Activated T-helper 1 cell treated with anti-CD3 and anti-CD28 coated beads, Interleukin-12 subunit alpha, Interleukin-12 subunit beta, Interleukin-2, Interleukin-4 antibody, amounts not matched to agents 30 ng/mL and 10 ng/mL and 1 ng/mL, durations not matched to agents 14 hours and 24 hours and 36 hours (primary cell): ENCODE measurements at regions of chr19 and their contacts with region 1.

Region 1: DNA sequence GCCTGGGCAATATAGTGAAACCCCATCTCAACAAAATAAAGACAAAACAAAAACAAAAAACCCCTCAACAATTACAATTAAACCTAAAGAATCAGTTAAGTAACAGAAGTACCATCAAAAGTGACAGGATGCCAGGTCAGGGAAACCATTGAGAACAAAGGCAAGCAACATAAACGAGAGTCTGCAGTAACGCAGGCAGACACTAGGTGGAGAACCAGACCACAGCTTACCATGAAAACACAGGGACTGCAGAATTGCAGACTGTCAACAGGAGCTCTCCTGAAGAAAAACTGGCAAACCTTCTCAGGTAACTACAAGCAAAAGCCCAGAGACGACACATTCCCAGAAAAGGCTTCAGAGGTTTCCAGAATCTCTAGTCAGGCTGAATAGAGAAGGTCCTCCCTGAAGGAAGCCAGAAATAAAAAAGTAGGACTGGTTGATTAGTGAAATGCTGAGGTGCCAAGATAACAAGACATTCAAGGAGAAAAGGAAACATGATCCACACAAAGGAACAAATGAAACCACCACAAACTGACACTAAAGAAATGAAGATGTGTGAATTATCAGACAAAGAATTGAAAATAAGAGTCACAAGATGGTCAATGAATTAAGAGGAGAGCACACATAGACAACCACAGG is 2.2 kb upstream of the ZNF665 start:
- DNase-seq: peak; percentile 65
- H3K4me3 Mint-ChIP-seq: peak overlapping the region; percentile 46
- H3K27ac Mint-ChIP-seq: no peak overlapping the region
- H3K4me1 Mint-ChIP-seq: peaks cover 32% of the 10 kb centered on the region
- H3K27me3 Mint-ChIP-seq: no peaks in the 10 kb centered on the region

Region 2: DNA sequence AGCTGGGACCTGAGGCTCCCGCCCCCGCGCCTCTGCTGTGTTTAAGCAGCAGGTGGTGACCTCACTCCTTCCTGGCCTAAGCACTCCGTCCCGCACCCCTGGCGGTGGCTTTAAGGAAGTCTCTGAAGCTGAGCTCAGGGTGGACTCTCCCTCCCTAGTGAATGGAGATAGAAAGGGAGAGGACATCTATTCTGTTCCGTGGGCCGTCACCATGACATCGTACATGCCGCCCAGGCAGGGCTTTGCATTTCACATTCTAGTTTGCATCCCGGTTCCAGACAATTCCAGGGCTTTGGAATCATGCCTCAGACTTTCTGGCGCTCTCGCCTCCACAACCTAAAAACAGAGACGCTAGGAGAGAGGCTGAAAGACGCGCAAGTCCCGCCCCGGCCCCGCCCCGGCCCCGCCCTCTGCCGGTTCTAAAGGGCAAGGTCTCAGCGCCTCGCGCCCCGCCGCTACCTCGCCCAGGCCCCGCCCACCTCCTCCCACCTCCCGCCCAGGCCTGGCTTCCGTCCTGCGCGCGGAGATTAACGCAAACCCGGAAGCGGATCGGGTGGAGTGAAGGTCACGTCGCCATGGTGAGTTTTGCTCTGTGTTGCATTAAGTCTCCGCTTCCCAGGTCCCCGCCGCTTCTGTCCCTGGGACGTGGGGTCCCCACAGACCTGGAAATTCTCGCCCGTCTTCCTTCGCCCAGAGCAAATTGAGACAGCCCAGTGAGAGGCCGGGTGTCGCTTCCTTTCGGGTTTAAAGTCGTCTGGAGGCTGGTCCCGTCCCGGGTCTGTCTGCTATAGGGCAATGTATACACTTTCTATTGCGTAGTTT is 668.0 kb before region 1 on chr19 and contains the start of gene ZNF808:
- intact Hi-C with region 1: loop called (anchors 5 kb)
- DNase-seq: peak; percentile 87
- H3K4me3 Mint-ChIP-seq: peak within 1 kb of the TSS; percentile 99
- H3K27ac Mint-ChIP-seq: peak within 1 kb of the TSS; percentile 98
- H3K4me1 Mint-ChIP-seq: peaks cover 12% of the 10 kb centered on the region
- H3K27me3 Mint-ChIP-seq: no peaks in the 10 kb centered on the region
- total RNA-seq, gene ZNF808: 19.1 and 20.0 TPM in 2 replicates

Region 3: DNA sequence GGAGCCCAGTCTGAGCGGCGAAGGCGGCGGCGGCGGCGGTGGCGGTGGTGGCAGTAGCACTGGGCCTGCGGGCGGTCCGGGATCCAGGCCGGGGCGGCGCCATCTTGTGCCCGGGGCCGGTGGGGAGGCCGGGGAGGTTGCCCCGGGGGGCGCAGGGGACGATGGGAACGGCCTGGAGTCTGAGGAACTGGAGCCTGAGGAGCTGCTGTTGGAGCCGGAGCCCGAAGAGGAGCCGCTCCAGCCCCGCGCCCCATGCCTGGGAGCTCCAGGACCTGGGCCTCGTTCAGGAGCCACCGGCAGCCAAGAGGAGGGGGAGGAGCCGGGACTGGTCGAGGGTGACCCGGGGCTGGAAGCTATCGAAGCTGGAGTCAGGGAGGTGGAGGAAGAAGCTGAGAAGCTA is 385.6 kb before region 1 on chr19:
- intact Hi-C with region 1: no loop called
- DNase-seq: no peak
- H3K4me3 Mint-ChIP-seq: no peak overlapping the region
- H3K27ac Mint-ChIP-seq: no peak overlapping the region
- H3K4me1 Mint-ChIP-seq: no peaks in the 10 kb centered on the region
- H3K27me3 Mint-ChIP-seq: no peaks in the 10 kb centered on the region

Region 4: DNA sequence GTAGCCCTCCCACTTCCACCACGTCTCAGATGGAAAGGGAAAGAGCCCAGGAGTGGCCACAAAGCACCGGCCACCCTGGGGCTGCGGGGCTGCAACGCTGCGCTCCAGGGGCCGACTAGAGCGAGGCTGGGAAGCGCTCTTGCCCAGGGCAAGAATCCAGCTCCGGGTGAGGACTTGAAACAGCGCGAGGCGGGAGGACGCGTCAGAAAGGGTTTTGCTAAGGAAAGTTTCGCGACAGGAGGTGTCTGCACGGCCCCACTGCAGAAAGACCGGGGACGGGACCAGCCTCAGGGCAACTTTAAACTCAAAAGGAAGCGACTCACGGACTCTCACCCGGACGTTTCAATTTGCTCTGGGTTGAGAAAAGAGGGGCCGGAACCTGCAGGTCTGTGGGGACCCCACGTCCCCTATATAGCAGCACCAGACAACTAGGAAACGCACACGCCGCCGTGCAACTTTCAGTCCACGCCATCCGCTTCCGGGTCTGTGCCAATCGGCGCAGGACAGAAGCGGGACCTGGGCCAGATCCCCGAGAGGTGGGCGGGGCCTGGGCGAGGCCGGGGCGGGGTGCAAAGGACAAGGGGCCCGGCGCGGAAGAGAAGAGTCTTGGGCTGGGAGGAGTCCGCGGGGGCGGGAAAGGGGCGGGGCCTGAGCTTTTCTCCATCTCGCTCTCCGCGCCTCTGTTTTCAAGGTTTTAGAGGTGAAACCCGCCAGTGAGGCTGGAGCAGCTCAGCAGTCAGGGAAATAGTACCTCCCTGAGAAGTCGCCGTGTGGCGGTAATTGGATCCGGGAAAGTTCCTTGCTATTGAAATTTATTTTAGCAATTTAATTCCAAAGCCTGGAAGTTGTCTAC is 232.8 kb before region 1 on chr19 and contains the start of gene ZNF816:
- intact Hi-C with region 1: loop called (anchors 1 kb)
- DNase-seq: peak; percentile 99
- H3K4me3 Mint-ChIP-seq: peak within 1 kb of the TSS; percentile 98
- H3K27ac Mint-ChIP-seq: peak within 1 kb of the TSS; percentile 93
- H3K4me1 Mint-ChIP-seq: peaks cover 25% of the 10 kb centered on the region
- H3K27me3 Mint-ChIP-seq: no peaks in the 10 kb centered on the region
- total RNA-seq, gene ZNF816: 7.0 and 9.4 TPM in 2 replicates

Region 5: DNA sequence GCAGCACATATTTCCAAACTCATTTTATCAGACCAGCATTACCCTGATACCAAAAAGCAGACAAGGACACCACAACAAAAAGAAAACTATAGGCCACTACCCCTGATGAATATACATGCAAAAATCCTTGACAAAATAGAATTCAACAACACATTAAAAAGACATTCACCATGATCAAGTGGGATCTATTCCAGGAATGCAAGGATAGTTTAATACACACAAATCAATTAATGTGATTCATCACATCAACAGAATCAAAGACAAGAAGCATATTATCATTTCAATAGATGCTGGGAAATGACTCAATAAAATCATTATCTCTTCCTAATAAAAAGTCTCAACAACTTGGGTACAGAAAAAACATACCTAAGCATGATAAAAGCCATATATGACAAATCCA is 47.7 kb before region 1 on chr19:
- intact Hi-C with region 1: no loop called
- DNase-seq: no peak
- H3K4me3 Mint-ChIP-seq: no peak overlapping the region
- H3K27ac Mint-ChIP-seq: no peak overlapping the region
- H3K4me1 Mint-ChIP-seq: no peaks in the 10 kb centered on the region
- H3K27me3 Mint-ChIP-seq: no peaks in the 10 kb centered on the region

Region 6: DNA sequence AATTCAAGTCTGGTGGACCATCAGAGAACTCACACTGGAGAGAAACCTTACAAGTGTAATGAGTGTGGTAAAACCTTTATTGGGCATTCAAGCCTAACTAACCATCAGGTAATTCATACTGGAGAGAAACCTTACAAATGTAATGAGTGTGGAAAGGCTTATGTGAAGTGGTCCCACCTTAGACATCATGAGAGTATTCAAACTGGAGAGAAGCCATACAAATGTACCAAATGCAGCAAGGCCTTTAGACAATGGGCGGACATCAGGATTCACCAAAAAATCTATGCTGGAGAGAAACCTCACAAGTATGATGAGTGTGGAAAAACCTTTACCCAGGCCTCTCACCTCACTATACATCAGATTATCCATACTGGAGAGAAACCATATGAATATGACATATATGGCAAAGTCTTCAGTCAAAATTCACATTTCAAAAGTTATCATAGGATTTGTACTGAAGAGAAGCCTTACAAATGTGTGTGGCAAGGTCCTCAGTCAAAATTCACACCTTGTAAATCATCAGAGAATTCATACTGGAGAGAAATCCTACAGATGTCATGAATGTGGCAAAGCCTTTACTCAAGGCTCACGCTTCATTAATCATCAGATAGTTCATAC is 17.4 kb after region 1 on chr19:
- intact Hi-C with region 1: no loop called
- DNase-seq: no peak
- H3K4me3 Mint-ChIP-seq: no peak overlapping the region
- H3K27ac Mint-ChIP-seq: no peak overlapping the region
- H3K4me1 Mint-ChIP-seq: no peaks in the 10 kb centered on the region
- H3K27me3 Mint-ChIP-seq: no peaks in the 10 kb centered on the region

Region 7: GRCh38 chr19:53365134-53365898 is 169.9 kb after region 1 on chr19 and contains the start of gene ZNF525:
- intact Hi-C with region 1: loop called (anchors 1 kb)
- DNase-seq: peak; percentile 93
- H3K4me3 Mint-ChIP-seq: peak within 1 kb of the TSS; percentile 93
- H3K27ac Mint-ChIP-seq: peak within 1 kb of the TSS; percentile 91
- H3K4me1 Mint-ChIP-seq: peaks cover 17% of the 10 kb centered on the region
- H3K27me3 Mint-ChIP-seq: no peaks in the 10 kb centered on the region
- total RNA-seq, gene ZNF525: 16.5 and 19.0 TPM in 2 replicates

Region 8: GRCh38 chr19:53467485-53468262 is 272.3 kb after region 1 on chr19 and contains the start of gene ZNF813:
- intact Hi-C with region 1: loop called (anchors 1 kb)
- DNase-seq: peak; percentile 89
- H3K4me3 Mint-ChIP-seq: peak within 1 kb of the TSS; percentile 89
- H3K27ac Mint-ChIP-seq: peak within 1 kb of the TSS; percentile 68
- H3K4me1 Mint-ChIP-seq: peaks cover 13% of the 10 kb centered on the region
- H3K27me3 Mint-ChIP-seq: peaks cover 4% of the 10 kb centered on the region
- total RNA-seq, gene ZNF813: 3.7 and 4.3 TPM in 2 replicates

Region 9: GRCh38 chr19:54023191-54023590 is 827.8 kb after region 1 on chr19:
- intact Hi-C with region 1: loop called (anchors 5 kb)
- DNase-seq: no peak
- H3K4me3 Mint-ChIP-seq: no peak overlapping the region
- H3K27ac Mint-ChIP-seq: no peak overlapping the region
- H3K4me1 Mint-ChIP-seq: no peaks in the 10 kb centered on the region
- H3K27me3 Mint-ChIP-seq: no peaks in the 10 kb centered on the region